ENCODE measurements at regions of chr16 and their contacts with region 1.

Region 1: GRCh38 chr16:30534368-30535105 is at the start of gene ZNF747:
- DNase-seq: peak; percentile 98
- H3K4me3 Mint-ChIP-seq: peak within 1 kb of the TSS; percentile 88
- H3K27ac Mint-ChIP-seq: peak within 1 kb of the TSS; percentile 97
- H3K4me1 Mint-ChIP-seq: peaks cover 31% of the 10 kb centered on the region
- H3K27me3 Mint-ChIP-seq: no peaks in the 10 kb centered on the region
- total RNA-seq, gene ZNF747: 10.5 and 13.6 TPM in 2 replicates

Region 2: GRCh38 chr16:30551781-30552180 is 17.2 kb after region 1 on chr16:
- intact Hi-C with region 1: loop called (anchors 1 kb)
- DNase-seq: peak; percentile 91
- H3K4me3 Mint-ChIP-seq: peak overlapping the region; percentile 77
- H3K27ac Mint-ChIP-seq: peak overlapping the region; percentile 92
- H3K4me1 Mint-ChIP-seq: peaks cover 51% of the 10 kb centered on the region
- H3K27me3 Mint-ChIP-seq: no peaks in the 10 kb centered on the region

Region 3: DNA sequence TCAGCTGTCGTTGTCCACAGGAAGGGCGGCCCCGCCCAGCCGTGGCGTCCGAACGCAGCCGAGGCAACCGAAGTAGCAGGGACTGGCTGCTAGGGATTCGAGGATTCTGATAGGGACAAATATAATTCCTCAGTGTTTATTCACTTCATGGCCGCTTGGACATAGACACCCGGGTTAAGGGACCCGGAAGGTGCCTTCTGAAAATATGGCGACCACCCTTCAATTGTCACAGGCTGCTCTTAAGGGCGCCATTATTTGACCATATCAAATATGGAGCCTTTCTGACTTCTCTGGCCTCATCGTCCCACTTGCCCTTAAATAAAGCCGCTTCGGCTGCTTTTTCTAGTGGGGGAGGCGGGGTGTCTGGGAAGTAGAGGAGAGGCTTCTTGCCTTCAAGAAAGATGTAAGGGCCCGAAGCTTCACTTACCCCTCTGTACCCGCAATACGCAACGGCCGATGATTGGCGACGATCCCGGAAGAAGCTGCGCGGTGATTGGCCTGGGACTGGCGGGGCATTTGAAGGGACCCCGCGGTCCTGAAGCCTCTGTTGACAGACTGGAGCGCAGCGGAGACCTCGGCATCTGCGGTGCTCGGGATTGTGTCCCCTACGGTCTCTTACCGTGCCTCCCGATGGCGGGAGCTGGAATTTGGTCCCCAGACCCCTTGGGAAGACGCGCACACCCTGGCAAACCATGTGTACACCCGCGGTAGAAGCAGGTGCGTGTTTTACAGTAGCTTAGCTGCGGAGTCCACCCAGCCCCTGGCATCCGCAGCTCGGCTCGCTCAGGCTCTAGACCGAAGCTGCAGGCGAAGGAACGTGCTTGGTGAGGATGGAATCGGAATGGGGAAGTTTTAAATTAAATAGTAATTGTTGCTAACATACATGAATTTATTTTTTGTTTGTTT is 37.4 kb after region 1 on chr16 and contains the start of gene ZNF688:
- intact Hi-C with region 1: loop called (anchors 1 kb)
- DNase-seq: peak; percentile 98
- H3K4me3 Mint-ChIP-seq: peak within 1 kb of the TSS; percentile 97
- H3K27ac Mint-ChIP-seq: peak within 1 kb of the TSS; percentile 91
- H3K4me1 Mint-ChIP-seq: peaks cover 49% of the 10 kb centered on the region
- H3K27me3 Mint-ChIP-seq: no peaks in the 10 kb centered on the region
- total RNA-seq, gene ZNF688: 6.6 and 8.0 TPM in 2 replicates

Region 4: GRCh38 chr16:30609926-30610839 is 75.6 kb after region 1 on chr16 and contains the start of gene ZNF689:
- intact Hi-C with region 1: loop called (anchors 1 kb)
- DNase-seq: peak; percentile 99
- H3K4me3 Mint-ChIP-seq: peak within 1 kb of the TSS; percentile 94
- H3K27ac Mint-ChIP-seq: peak within 1 kb of the TSS; percentile 97
- H3K4me1 Mint-ChIP-seq: peaks cover 24% of the 10 kb centered on the region
- H3K27me3 Mint-ChIP-seq: no peaks in the 10 kb centered on the region
- total RNA-seq, gene ZNF689: 14.0 and 14.6 TPM in 2 replicates

Region 5: GRCh38 chr16:30957456-30958174 is 423.1 kb after region 1 on chr16 and contains the start of gene SETD1A:
- intact Hi-C with region 1: no loop called
- DNase-seq: peak; percentile 99
- H3K4me3 Mint-ChIP-seq: peak within 1 kb of the TSS; percentile 94
- H3K27ac Mint-ChIP-seq: peak within 1 kb of the TSS; percentile 99
- H3K4me1 Mint-ChIP-seq: peaks cover 32% of the 10 kb centered on the region
- H3K27me3 Mint-ChIP-seq: no peaks in the 10 kb centered on the region
- total RNA-seq, gene SETD1A: 30.7 and 31.5 TPM in 2 replicates